B cell (primary cell): ENCODE measurements at regions of chr14 and their contacts with region 1.

Region 1: DNA sequence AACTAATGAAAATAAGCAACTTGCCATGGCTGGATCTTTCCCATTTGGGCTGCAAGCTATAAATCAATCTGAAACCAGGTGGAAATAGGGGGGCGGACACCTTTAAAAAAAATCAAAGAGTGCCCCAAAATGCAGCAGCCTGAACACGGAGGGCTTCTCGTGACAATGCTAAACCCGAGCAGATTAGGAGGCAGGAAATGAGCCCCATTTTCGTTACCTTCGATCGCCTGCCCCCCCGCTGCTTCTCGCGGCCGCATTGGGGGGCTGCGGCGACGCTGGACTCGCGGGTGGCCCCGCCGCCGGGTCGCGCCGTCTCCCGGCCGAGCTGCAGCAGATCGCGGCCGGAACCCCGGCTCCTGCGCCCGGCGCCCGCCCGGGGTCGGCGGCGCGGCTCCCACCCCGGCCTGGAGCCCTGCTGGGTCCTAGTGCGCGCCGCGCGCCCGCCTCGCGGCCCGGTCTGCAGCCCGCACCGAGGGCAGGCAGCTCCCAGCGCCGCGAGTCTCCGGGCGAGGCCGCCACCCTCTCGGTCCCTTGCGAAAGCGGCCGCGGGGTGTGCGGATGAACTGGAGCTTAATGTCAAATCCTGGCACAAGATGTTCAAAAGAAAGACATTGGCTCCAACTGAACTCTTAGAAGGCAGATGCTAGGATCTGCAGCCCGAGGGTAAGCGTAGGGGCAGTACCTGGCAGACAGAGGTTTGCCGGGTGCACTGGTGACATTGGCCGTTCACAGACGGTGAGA is 201.9 kb upstream of the FOXN3 start:
- DNase-seq: peak; percentile 81
- ATAC-seq: peak; percentile 72
- H3K4me3 ChIP-seq: peak overlapping the region; percentile 61 to 93 (median 86)
- H3K4me3 Mint-ChIP-seq: peak overlapping the region; percentile 92
- H3K27ac ChIP-seq: peak overlapping the region in 1 of 2 donors; percentile 71
- H3K27ac Mint-ChIP-seq: peak overlapping the region; percentile 86
- H3K4me1 ChIP-seq: peaks cover 51 to 55% of the 10 kb centered on the region in 2 donors
- H3K4me1 Mint-ChIP-seq: peaks cover 66% of the 10 kb centered on the region
- H3K27me3 ChIP-seq: no peaks in the 10 kb centered on the region
- H3K27me3 Mint-ChIP-seq: no peaks in the 10 kb centered on the region
- CTCF ChIP-seq: no peak

Region 2: GRCh38 chr14:89330236-89331002 is 288.6 kb before region 1 on chr14:
- CTCF ChIA-PET with region 1: no interaction called
- POLR2A ChIA-PET with region 1: no interaction called
- intact Hi-C with region 1: loop called (anchors 5 kb)
- DNase-seq: peak; percentile 8
- ATAC-seq: no peak
- H3K4me3 ChIP-seq: no peak overlapping the region
- H3K4me3 Mint-ChIP-seq: no peak overlapping the region
- H3K27ac ChIP-seq: no peak overlapping the region
- H3K27ac Mint-ChIP-seq: peak overlapping the region; percentile 51
- H3K4me1 ChIP-seq: peaks cover 31 to 39% of the 10 kb centered on the region in 2 donors
- H3K4me1 Mint-ChIP-seq: peaks cover 52% of the 10 kb centered on the region
- H3K27me3 ChIP-seq: no peaks in the 10 kb centered on the region
- H3K27me3 Mint-ChIP-seq: no peaks in the 10 kb centered on the region
- CTCF ChIP-seq: no peak

Region 3: DNA sequence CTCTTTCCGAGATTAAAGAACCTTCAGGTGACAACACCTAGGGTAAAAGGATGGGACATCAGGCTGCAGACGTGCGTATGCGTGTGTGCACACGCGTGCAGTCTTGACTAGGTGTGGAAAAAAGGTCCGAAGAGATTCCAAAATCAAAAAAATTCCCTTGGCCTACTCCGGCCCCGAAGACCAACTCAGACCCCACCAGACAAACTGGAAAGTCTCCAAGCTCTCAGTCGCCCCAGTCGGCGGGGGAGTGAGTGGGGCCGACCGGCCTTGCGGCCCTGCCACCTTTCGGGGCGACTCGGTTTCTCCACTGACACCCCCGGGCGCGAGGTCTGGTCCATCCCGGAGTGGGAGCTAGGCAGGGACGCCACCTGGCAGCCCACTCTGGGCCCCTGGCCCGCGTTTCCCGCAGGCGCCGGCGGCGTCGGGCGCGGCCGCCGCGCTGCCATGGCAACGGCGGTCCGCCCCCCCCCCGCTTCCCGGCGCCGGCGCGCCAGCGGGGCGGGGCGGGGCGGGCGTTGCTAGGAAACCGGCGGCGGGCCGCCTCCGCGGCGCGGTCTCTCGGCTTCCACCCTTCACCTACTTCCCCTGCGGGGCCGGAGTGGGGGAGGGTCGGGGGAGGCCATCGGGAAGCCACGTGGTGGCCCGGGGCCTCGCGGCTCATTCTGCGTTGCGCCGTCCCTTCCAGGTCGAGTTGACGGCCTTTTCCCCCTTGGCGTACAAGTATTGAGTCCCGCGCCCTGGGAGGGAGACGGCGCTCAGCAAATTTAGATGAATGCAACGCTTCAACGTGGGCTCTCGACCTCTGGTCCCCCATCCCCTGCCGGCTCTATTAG is 82.4 kb after region 1 on chr14:
- CTCF ChIA-PET with region 1: no interaction called
- POLR2A ChIA-PET with region 1: interaction called, 3 read pairs
- intact Hi-C with region 1: loop called (anchors 1 kb)
- DNase-seq: peak; percentile 90
- ATAC-seq: peak; percentile 96
- H3K4me3 ChIP-seq: peak overlapping the region; percentile 4 to 80 (median 62)
- H3K4me3 Mint-ChIP-seq: peak overlapping the region; percentile 88
- H3K27ac ChIP-seq: peak overlapping the region; percentile 28 to 71
- H3K27ac Mint-ChIP-seq: peak overlapping the region; percentile 85
- H3K4me1 ChIP-seq: peaks cover 25% of the 10 kb centered on the region in 2 donors
- H3K4me1 Mint-ChIP-seq: peaks cover 25% of the 10 kb centered on the region
- H3K27me3 ChIP-seq: no peaks in the 10 kb centered on the region
- H3K27me3 Mint-ChIP-seq: no peaks in the 10 kb centered on the region
- CTCF ChIP-seq: no peak